GM12878 (cell line): ENCODE measurements at regions of chr5 and their contacts with region 1.

Region 1: DNA sequence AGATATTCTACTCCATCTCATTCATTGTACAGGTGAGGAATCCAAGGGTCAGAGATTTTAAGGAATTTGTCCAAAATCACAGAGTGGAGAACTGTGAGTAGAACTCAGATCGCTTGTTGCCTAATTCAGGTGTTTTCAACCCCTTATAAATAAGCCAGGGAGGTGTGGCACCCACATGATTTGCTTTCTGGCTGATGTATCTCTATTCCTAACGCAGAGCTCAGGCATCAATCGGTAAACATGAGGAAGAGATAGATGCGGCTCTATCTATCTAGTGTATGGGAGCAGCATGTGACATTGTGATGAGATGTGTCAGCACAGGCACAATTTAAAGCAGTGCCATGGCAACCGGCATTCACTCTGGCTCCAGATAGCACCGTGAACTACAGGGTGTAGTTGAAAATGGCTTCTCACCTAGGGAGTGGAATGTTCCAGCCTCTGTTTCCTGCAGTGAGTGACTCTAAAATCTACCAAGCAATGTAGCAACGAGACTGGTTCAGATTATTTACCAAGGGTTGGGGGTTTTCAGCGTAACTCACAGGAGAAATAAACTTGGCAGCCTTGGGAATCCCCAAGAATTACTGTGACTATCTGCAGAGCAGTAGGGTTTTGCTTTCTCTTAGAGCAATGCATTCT is 53.4 kb upstream of the SUB1 start:
- DNase-seq: peak; percentile 60
- ATAC-seq: peak; percentile 79
- H3K4me3 ChIP-seq: peak overlapping the region; percentile 70
- H3K27ac ChIP-seq: peak overlapping the region; percentile 77
- H3K4me1 ChIP-seq: peaks cover 33% of the 10 kb centered on the region
- H3K27me3 ChIP-seq: no peaks in the 10 kb centered on the region
- CTCF ChIP-seq: no peak
- EP300 ChIP-seq: no peak
- POLR2A ChIP-seq: no peak; the same call in 1 of the 2 replicates
- RAD21 ChIP-seq: no peak

Region 2: DNA sequence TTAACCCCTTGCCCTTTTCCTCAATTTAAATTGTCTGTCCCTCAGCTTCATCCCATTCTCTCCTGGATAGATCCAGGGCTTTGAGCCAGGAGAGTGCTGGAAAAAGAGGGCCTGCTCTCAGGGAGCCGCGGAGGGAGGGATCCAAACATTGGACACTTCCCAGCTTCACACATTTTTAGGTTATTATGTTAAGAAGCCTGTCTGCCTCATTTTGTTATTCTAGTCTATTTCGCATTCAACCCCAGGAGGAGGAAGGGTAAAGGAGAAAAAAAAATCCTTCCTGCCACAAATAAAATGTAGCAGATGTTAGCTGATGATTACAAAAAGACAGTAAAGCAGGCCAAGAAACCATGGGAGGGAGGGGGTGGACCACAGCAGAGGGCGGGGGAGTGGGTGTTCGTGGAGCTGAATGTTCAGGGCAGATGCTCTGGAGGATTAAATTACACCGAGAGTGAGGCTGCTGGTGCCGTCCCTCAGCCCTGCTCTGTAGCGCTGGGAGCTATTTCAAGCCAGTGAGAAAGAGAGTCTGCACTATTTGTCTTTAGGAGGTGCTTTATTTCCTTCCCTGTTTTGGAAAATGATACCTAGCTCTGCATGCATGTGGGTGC is 26.9 kb before region 1 on chr5:
- CTCF ChIA-PET with region 1: interaction called, 4 read pairs
- POLR2A ChIA-PET with region 1: no interaction called
- RAD21 ChIA-PET with region 1: interaction called, 3 read pairs
- SMC1A ChIA-PET with region 1: interaction called, 11 read pairs
- in situ Hi-C with region 1: no loop called
- intact Hi-C with region 1: no loop called
- DNase-seq: no peak
- ATAC-seq: peak; percentile 53
- H3K4me3 ChIP-seq: no peak overlapping the region
- H3K27ac ChIP-seq: no peak overlapping the region
- H3K4me1 ChIP-seq: peaks cover 9% of the 10 kb centered on the region
- H3K27me3 ChIP-seq: peaks cover 0 to 7% of the 10 kb centered on the region in 2 experiments; a peak in 1 of 4 replicates
- CTCF ChIP-seq: no peak
- EP300 ChIP-seq: no peak
- POLR2A ChIP-seq: no peak
- RAD21 ChIP-seq: no peak

Region 3: GRCh38 chr5:32542216-32543059 is 10.4 kb after region 1 on chr5:
- CTCF ChIA-PET with region 1: interaction called, 6 read pairs
- POLR2A ChIA-PET with region 1: interaction called, 5 read pairs
- RAD21 ChIA-PET with region 1: interaction called, 20 read pairs
- SMC1A ChIA-PET with region 1: interaction called, 11 read pairs
- in situ Hi-C with region 1: no loop called
- intact Hi-C with region 1: no loop called
- DNase-seq: peak; percentile 97
- ATAC-seq: peak; percentile 69
- H3K4me3 ChIP-seq: peak overlapping the region; percentile 12; the same call in 1 of the 2 replicates
- H3K27ac ChIP-seq: peak overlapping the region; percentile 96
- H3K4me1 ChIP-seq: peaks cover 55% of the 10 kb centered on the region
- H3K27me3 ChIP-seq: no peaks in the 10 kb centered on the region
- CTCF ChIP-seq: no peak
- EP300 ChIP-seq: peak; percentile 94 to 96
- POLR2A ChIP-seq: 0 out of 2 replicates have a peak, but pooled peaks have one; percentile 39
- RAD21 ChIP-seq: peak; percentile 8; the same call in 1 of the 2 replicates

Region 4: GRCh38 chr5:32572778-32573480 is 40.9 kb after region 1 on chr5:
- CTCF ChIA-PET with region 1: interaction called, 24 read pairs
- POLR2A ChIA-PET with region 1: interaction called, 7 read pairs
- RAD21 ChIA-PET with region 1: interaction called, 80 read pairs
- SMC1A ChIA-PET with region 1: interaction called, 505 read pairs
- in situ Hi-C with region 1: no loop called
- intact Hi-C with region 1: loop called (anchors 1 kb)
- DNase-seq: peak; percentile 91
- ATAC-seq: peak; percentile 82
- H3K4me3 ChIP-seq: 0 out of 2 replicates have a peak overlapping the region, but pooled peaks have one; percentile 50
- H3K27ac ChIP-seq: peak overlapping the region; percentile 79
- H3K4me1 ChIP-seq: peaks cover 58% of the 10 kb centered on the region
- H3K27me3 ChIP-seq: no peaks in the 10 kb centered on the region
- CTCF ChIP-seq: no peak; a peak in 1 of 6 replicates
- EP300 ChIP-seq: peak; percentile 92 to 95
- POLR2A ChIP-seq: no peak
- RAD21 ChIP-seq: peak; percentile 34

Region 5: GRCh38 chr5:32942225-32942989 is 410.4 kb after region 1 on chr5:
- CTCF ChIA-PET with region 1: no interaction called
- POLR2A ChIA-PET with region 1: no interaction called
- RAD21 ChIA-PET with region 1: no interaction called
- SMC1A ChIA-PET with region 1: no interaction called
- in situ Hi-C with region 1: no loop called
- intact Hi-C with region 1: no loop called
- DNase-seq: no peak
- ATAC-seq: peak; percentile 86
- H3K4me3 ChIP-seq: no peak overlapping the region
- H3K27ac ChIP-seq: no peak overlapping the region
- H3K4me1 ChIP-seq: no peaks in the 10 kb centered on the region
- H3K27me3 ChIP-seq: no peaks in the 10 kb centered on the region
- CTCF ChIP-seq: peak; percentile 35 to 61 (median 49)
- EP300 ChIP-seq: no peak
- POLR2A ChIP-seq: no peak
- RAD21 ChIP-seq: peak; percentile 41